Dendritic cell treated with granulocyte-macrophage colony-stimulating factor and Interleukin-4, amounts not matched to agents 40 ng/mL and 50 ng/mL, for 4 days (primary cell): ENCODE measurements at regions of chr15 and their contacts with region 1.

Region 1: DNA sequence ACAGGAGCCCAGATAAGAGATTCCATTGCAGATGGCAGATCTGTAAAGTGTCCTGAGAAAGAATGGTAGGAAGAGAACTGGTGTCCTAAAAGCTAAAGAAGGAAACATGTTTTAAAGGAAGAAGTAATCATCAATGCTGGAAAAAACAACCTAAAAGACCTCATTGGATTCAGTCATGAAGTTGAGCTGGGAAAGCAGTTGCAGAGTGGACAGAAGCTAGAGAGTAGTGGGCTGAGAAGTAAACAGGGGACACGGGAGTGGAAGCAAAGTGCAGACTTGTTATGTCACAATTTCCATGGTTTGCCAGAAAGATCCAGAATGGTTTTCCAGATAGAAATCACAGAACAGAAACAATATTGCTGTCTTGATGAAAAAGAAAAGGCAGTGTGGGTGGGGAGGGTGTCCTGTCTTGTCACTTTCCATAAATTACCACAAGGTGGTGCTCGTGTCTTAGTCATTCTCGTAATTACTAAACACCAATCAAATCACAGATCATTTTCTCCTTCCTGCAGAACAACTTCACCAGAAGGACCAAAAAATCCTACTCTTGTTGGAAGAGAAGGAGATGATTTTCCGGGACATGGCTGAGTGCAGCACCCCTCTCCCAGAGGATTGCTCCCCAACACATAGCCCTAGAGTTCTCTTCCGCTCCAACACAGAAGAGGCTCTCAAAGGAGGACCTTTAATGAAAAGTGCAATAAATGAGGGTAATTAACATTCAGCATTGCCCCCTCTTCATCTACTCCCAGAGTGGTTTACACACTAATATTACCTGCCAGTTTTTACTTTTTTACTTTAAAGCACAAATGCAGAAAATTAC is 64.5 kb downstream of the KLHL25 start:
- H3K4me3 Mint-ChIP-seq: no peak overlapping the region
- H3K27ac Mint-ChIP-seq: peak overlapping the region; percentile 26
- H3K4me1 Mint-ChIP-seq: peaks cover 7% of the 10 kb centered on the region
- H3K27me3 Mint-ChIP-seq: no peaks in the 10 kb centered on the region

Region 2: GRCh38 chr15:85618956-85619491 is 111.2 kb before region 1 on chr15:
- intact Hi-C with region 1: no loop called
- H3K4me3 Mint-ChIP-seq: no peak overlapping the region
- H3K27ac Mint-ChIP-seq: no peak overlapping the region
- H3K4me1 Mint-ChIP-seq: peaks cover 24% of the 10 kb centered on the region
- H3K27me3 Mint-ChIP-seq: no peaks in the 10 kb centered on the region

Region 3: GRCh38 chr15:85831415-85832113 is 101.4 kb after region 1 on chr15:
- intact Hi-C with region 1: loop called (anchors 2 kb)
- H3K4me3 Mint-ChIP-seq: no peak overlapping the region
- H3K27ac Mint-ChIP-seq: peak overlapping the region; percentile 76
- H3K4me1 Mint-ChIP-seq: peaks cover 26% of the 10 kb centered on the region
- H3K27me3 Mint-ChIP-seq: peaks cover 2% of the 10 kb centered on the region

Region 4: GRCh38 chr15:85840065-85840801 is 110.0 kb after region 1 on chr15:
- intact Hi-C with region 1: loop called (anchors 1 kb)
- H3K4me3 Mint-ChIP-seq: peak overlapping the region; percentile 75
- H3K27ac Mint-ChIP-seq: peak overlapping the region; percentile 74
- H3K4me1 Mint-ChIP-seq: peaks cover 11% of the 10 kb centered on the region
- H3K27me3 Mint-ChIP-seq: peaks cover 26% of the 10 kb centered on the region

Region 5: DNA sequence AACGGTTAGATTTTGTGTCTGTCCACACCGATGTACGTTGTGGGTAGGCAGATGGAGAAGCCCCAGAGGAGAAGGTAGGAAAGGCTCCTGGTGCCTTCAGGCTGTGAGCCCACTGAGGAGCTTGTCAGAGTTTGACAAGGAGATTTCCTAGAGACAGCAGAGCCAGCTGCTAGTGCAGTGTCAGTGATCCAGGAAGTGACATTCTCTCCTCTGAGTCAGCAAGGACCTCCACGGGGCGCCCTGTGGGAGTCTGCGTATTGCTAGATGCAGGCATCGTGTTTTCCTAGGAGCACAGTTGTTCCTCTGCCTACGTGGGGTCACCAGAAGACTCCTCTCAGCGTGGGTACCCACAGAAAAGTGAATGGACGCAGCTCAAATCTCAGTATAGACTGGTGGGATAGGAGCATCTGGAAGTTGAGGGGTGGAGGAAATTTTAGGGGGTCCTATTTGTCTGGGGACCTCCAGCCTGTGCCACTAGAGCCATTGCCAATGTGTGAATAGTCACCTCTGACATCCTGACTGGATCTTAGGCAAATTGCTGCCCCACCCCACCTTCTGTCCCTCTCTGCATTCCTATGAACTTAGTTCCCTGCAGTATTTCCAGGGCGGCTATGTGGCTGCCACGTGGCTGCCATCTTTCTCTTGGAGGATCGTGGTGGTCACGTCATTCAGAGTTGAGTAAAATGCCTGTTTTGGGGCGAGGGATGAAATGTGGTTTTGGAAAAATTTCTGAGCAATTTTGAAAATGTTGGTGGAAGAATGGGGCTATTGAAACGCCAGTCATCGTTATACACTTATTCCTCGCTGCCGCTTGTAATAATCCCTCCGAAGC is 149.3 kb after region 1 on chr15:
- intact Hi-C with region 1: no loop called
- H3K4me3 Mint-ChIP-seq: no peak overlapping the region
- H3K27ac Mint-ChIP-seq: no peak overlapping the region
- H3K4me1 Mint-ChIP-seq: no peaks in the 10 kb centered on the region
- H3K27me3 Mint-ChIP-seq: peaks cover 24% of the 10 kb centered on the region